ENCODE measurements at regions of chr4 and their contacts with region 1.

Region 1: GRCh38 chr4:143882892-143883291 is 22.5 kb downstream of the GYPE start:
- DNase-seq: no peak

Region 2: GRCh38 chr4:144115519-144115918 is 232.6 kb after region 1 on chr4:
- intact Hi-C with region 1: loop called (anchors 10 kb)
- DNase-seq: no peak

Measured in posterior cingulate gyrus (tissue), 11 donors.